Body of pancreas (tissue), 4 donors: ENCODE measurements at regions of chr16 and their contacts with region 1.

Region 1: GRCh38 chr16:2531767-2532493 is 722 bp upstream of the CEMP1 start:
- DNase-seq: peak; percentile 99
- ATAC-seq: peak; percentile 95
- H3K4me3 ChIP-seq: peak overlapping the region; percentile 4 to 52
- H3K27ac ChIP-seq: peak overlapping the region; percentile 88 to 97 (median 94)
- H3K4me1 ChIP-seq: peaks cover 22% of the 10 kb centered on the region
- H3K27me3 ChIP-seq: no peaks in the 10 kb centered on the region
- CTCF ChIP-seq: no peak
- POLR2A ChIP-seq: peak; percentile 45 to 53 (median 47)

Region 2: GRCh38 chr16:2595393-2596205 is 63.7 kb after region 1 on chr16:
- intact Hi-C with region 1: loop called (anchors 10 kb)
- DNase-seq: no peak
- ATAC-seq: no peak
- H3K4me3 ChIP-seq: no peak overlapping the region
- H3K27ac ChIP-seq: no peak overlapping the region
- H3K4me1 ChIP-seq: no peaks in the 10 kb centered on the region
- H3K27me3 ChIP-seq: no peaks in the 10 kb centered on the region
- CTCF ChIP-seq: no peak
- POLR2A ChIP-seq: no peak

Region 3: GRCh38 chr16:2748757-2749455 is 217.0 kb after region 1 on chr16:
- intact Hi-C with region 1: no loop called
- DNase-seq: peak; percentile 57 to 82 (median 68)
- ATAC-seq: no peak
- H3K4me3 ChIP-seq: no peak overlapping the region
- H3K27ac ChIP-seq: peak overlapping the region in 3 of 4 donors; percentile 28 to 45 (median 39)
- H3K4me1 ChIP-seq: peaks cover 21% of the 10 kb centered on the region
- H3K27me3 ChIP-seq: no peaks in the 10 kb centered on the region
- CTCF ChIP-seq: no peak
- POLR2A ChIP-seq: no peak